ENCODE measurements at regions of chr4 and their contacts with region 1.

Region 1: GRCh38 chr4:152640058-152640833 is 39.6 kb downstream of the TMEM154 start:
- DNase-seq: peak in 2 of 6 donors; percentile 9 to 19
- ATAC-seq: peak; percentile 55 to 90 (median 85)
- H3K4me3 ChIP-seq: no peak overlapping the region
- H3K27ac ChIP-seq: no peak overlapping the region
- H3K4me1 ChIP-seq: peaks cover 0 to 7% (median 0%) of the 10 kb centered on the region in 3 donors
- H3K27me3 ChIP-seq: no peaks in the 10 kb centered on the region
- CTCF ChIP-seq: peak; percentile 24 to 51 (median 33)

Region 2: GRCh38 chr4:152436384-152436783 is 203.9 kb before region 1 on chr4:
- intact Hi-C with region 1: no loop called
- DNase-seq: no peak
- ATAC-seq: no peak
- H3K4me3 ChIP-seq: no peak overlapping the region
- H3K27ac ChIP-seq: no peak overlapping the region
- H3K4me1 ChIP-seq: peaks cover 0 to 6% (median 0%) of the 10 kb centered on the region in 3 donors
- H3K27me3 ChIP-seq: no peaks in the 10 kb centered on the region
- CTCF ChIP-seq: no peak

Region 3: DNA sequence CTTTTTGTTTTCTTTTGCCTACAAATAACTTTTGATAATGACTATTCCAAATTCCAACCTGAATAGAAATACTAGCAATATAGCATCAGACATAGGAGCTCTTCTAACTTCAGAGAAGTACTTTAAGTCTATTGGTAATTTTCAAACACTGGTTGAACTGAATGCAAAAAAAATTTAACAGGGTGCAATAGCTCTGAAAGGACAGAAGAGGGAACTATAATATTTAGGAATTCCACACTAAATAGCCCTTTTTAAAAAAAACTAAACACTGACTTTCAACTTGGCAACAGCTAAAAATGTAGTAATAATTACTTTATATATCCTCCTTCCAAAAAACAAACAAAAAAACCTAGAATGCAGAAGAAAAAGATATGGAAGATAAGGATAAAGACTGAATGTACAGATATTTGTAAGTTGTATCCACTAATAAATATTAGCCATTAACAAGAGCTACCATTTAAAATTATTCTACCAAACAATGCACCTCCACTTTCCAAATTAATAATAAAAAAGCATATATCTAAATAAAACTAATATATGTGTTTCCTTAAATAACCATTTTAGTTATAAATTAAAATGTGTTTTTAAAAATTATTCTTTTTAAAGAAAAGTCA is 185.7 kb before region 1 on chr4:
- intact Hi-C with region 1: loop called in 1 of 3 experiments (anchors 10 kb)
- DNase-seq: no peak
- ATAC-seq: peak in 3 of 4 donors; percentile 50 to 69 (median 56)
- H3K4me3 ChIP-seq: no peak overlapping the region
- H3K27ac ChIP-seq: no peak overlapping the region
- H3K4me1 ChIP-seq: peaks cover 0 to 3% (median 0%) of the 10 kb centered on the region in 3 donors
- H3K27me3 ChIP-seq: no peaks in the 10 kb centered on the region
- CTCF ChIP-seq: peak; percentile 9 to 49 (median 28)

Region 4: GRCh38 chr4:152784490-152785350 is 144.5 kb after region 1 on chr4:
- intact Hi-C with region 1: no loop called
- DNase-seq: no peak
- ATAC-seq: no peak
- H3K4me3 ChIP-seq: no peak overlapping the region
- H3K27ac ChIP-seq: no peak overlapping the region
- H3K4me1 ChIP-seq: peaks cover 0 to 32% (median 5%) of the 10 kb centered on the region in 3 donors
- H3K27me3 ChIP-seq: no peaks in the 10 kb centered on the region
- CTCF ChIP-seq: no peak

Region 5: DNA sequence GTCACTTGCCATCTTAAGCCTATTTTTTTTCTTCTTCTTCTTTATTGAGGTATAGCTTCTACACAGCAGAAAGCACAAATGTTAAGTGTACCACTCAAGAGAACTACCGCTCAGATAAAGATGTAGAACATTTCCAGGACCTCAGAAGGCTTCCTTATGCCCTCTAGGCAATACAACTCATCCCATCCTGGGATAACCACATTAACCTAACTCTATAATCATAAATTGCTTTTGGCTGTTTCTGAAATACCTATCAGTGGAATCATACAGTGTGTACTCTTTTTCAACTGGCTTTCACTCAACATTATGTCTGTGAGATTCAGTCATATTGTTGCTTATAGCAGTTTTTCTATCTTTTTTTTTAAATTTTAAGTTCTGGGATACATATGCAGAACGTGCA is 191.2 kb after region 1 on chr4:
- intact Hi-C with region 1: no loop called
- DNase-seq: no peak
- ATAC-seq: no peak
- H3K4me3 ChIP-seq: no peak overlapping the region
- H3K27ac ChIP-seq: no peak overlapping the region
- H3K4me1 ChIP-seq: peaks cover 0 to 4% (median 0%) of the 10 kb centered on the region in 3 donors
- H3K27me3 ChIP-seq: no peaks in the 10 kb centered on the region
- CTCF ChIP-seq: no peak